Naive thymus-derived CD4-positive, alpha-beta T cell (primary cell): ENCODE measurements at regions of chr20 and their contacts with region 1.

Region 1: DNA sequence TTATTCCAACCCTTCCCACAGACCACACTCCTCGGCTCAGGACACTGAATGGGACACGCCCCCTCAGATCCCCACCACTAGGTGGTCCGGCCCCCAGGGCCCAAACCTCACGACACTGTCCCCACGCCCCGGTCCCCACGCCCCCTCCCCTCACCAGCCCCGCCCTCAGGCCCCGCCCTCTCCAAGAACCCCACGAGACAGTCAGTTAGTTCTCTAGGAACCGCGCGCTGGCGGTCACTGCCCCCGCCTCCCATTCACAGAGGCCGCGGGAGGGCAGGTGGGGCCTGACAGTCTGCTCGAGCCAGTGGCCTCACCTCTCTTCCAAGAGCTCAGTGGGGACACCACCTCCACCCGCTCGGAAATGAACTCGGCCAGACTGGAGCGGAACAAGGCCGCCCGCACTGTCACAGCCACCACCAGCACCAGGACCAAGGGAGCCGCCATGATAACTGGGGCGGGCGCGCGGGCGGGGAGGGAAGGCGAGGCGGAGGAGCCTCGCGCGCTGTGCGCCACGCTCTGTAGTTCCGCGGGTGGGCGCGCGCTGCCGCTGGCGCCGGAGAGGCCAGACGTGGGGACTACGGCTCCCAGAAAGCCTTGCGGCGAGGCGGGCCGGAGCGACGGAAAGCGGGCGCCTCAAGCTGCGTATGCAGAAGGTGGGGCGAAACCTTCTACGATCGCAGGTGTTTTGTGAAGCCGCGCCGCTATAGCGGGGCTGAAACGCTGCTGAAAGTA is at the start of gene PIGU:
- DNase-seq: peak; percentile 88 to 97 (median 96)
- ATAC-seq: peak; percentile 99
- H3K4me3 ChIP-seq: peak within 1 kb of the TSS; percentile 63
- H3K4me3 Mint-ChIP-seq: peak within 1 kb of the TSS; percentile 95 to 99 (median 96)
- H3K27ac ChIP-seq: peak within 1 kb of the TSS; percentile 95
- H3K27ac Mint-ChIP-seq: peak within 1 kb of the TSS; percentile 85 to 98 (median 97)
- H3K4me1 ChIP-seq: peaks cover 4 to 5% of the 10 kb centered on the region in 2 donors
- H3K4me1 Mint-ChIP-seq: peaks cover 14 to 37% (median 24%) of the 10 kb centered on the region in 7 donors
- H3K27me3 ChIP-seq: no peaks in the 10 kb centered on the region
- H3K27me3 Mint-ChIP-seq: no peaks in the 10 kb centered on the region
- total RNA-seq, gene PIGU: 8.6 to 21.3 (median 16.1) TPM

Region 2: GRCh38 chr20:34302723-34303528 is 373.9 kb before region 1 on chr20 and contains the start of gene AHCY:
- CTCF ChIA-PET with region 1: interaction called, 4 read pairs
- POLR2A ChIA-PET with region 1: interaction called, 3 read pairs
- intact Hi-C with region 1: loop called in 1 of 2 experiments (anchors 1 kb)
- DNase-seq: peak; percentile 84 to 95 (median 92)
- ATAC-seq: peak; percentile 96
- H3K4me3 ChIP-seq: peak within 1 kb of the TSS; percentile 91
- H3K4me3 Mint-ChIP-seq: peak within 1 kb of the TSS; percentile 90 to 96 (median 91)
- H3K27ac ChIP-seq: peak within 1 kb of the TSS; percentile 87
- H3K27ac Mint-ChIP-seq: peak within 1 kb of the TSS; percentile 89 to 95 (median 93)
- H3K4me1 ChIP-seq: peaks cover 3 to 6% of the 10 kb centered on the region in 2 donors
- H3K4me1 Mint-ChIP-seq: peaks cover 0 to 27% (median 14%) of the 10 kb centered on the region in 7 donors
- H3K27me3 ChIP-seq: no peaks in the 10 kb centered on the region
- H3K27me3 Mint-ChIP-seq: peaks cover 0 to 2% (median 0%) of the 10 kb centered on the region in 5 donors
- total RNA-seq, gene AHCY: 19.1 to 62.9 (median 23.7) TPM

Region 3: DNA sequence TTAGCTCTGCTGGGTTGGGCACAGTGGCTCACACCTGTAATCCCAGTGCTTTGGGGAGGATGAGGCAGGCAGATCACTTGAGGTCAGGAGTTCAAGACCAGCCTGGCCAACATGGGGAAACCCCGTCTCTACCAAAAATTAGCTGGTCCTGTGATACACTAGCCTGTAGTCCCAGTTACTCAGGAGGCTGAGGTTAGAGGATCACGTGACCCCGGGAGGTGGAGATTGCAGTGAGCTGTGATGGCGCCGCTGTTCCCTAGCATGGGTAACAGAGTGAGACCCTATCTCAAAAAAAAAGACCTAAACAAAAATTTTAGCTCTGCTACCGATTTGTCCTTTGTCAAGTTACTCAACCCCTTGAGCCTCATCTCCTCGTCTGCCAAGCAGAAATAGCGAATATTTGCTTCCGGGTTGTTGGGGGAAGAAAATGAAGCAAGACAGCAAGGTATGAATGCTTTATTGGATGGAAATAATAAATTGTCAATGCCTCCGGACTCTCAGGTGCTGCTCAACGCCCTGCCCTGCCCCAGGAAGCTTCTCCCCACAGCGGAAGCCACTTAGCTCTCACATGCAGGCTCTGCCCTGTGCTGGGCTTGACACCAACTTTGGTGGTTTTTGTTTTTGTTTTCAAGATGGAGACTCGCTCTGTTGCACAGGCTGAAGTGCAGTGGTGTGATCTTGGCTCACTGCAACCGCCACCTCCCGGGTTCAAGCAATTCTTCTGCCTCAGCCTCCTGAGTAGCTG is 338.7 kb before region 1 on chr20:
- CTCF ChIA-PET with region 1: no interaction called
- POLR2A ChIA-PET with region 1: no interaction called
- intact Hi-C with region 1: no loop called
- DNase-seq: no peak
- ATAC-seq: peak; percentile 81
- H3K4me3 ChIP-seq: no peak overlapping the region
- H3K4me3 Mint-ChIP-seq: no peak overlapping the region
- H3K27ac ChIP-seq: no peak overlapping the region
- H3K27ac Mint-ChIP-seq: no peak overlapping the region
- H3K4me1 ChIP-seq: peaks cover 0 to 11% of the 10 kb centered on the region in 2 donors
- H3K4me1 Mint-ChIP-seq: peaks cover 0 to 4% (median 0%) of the 10 kb centered on the region in 7 donors
- H3K27me3 ChIP-seq: no peaks in the 10 kb centered on the region
- H3K27me3 Mint-ChIP-seq: peaks cover 0 to 2% (median 0%) of the 10 kb centered on the region in 5 donors

Region 4: DNA sequence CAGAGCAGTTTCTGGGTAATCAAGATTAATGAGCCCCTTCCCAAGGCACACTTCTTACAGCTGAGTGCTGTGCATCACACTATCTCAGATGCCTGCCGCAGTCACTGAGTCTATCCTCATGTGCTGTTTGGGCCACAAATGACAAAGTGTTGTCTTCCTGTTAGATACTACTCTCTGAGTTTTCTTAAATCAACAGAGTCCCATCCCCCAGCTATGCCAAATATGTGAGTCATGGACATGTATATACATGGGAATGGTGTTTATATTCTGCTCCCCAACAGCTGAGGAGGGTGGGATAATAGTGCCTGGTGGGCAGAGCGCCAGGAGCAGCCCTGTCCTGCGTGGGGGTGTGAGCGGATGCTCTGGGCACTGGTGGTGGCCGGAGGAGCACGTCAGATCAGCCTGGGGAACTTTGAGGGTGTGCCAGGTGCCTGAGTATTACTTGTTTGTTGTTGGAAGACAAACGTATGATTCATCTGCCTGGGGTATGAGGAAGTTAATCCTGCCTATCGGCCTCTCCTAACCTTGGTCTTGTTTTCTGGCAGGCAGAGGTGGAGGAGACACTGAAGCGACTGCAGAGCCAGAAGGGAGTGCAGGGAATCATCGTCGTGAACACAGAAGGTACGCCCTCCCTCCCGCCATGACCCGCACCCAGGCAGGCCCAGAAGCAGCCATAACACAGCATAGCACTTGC is 150.9 kb before region 1 on chr20:
- CTCF ChIA-PET with region 1: no interaction called
- POLR2A ChIA-PET with region 1: no interaction called
- intact Hi-C with region 1: no loop called
- DNase-seq: peak in 1 of 9 donors; percentile 9
- ATAC-seq: no peak
- H3K4me3 ChIP-seq: no peak overlapping the region
- H3K4me3 Mint-ChIP-seq: no peak overlapping the region
- H3K27ac ChIP-seq: no peak overlapping the region
- H3K27ac Mint-ChIP-seq: peak overlapping the region in 4 of 9 donors; percentile 17 to 43 (median 39)
- H3K4me1 ChIP-seq: peaks cover 0 to 15% of the 10 kb centered on the region in 2 donors
- H3K4me1 Mint-ChIP-seq: peaks cover 20 to 54% (median 33%) of the 10 kb centered on the region in 7 donors
- H3K27me3 ChIP-seq: no peaks in the 10 kb centered on the region
- H3K27me3 Mint-ChIP-seq: no peaks in the 10 kb centered on the region

Region 5: DNA sequence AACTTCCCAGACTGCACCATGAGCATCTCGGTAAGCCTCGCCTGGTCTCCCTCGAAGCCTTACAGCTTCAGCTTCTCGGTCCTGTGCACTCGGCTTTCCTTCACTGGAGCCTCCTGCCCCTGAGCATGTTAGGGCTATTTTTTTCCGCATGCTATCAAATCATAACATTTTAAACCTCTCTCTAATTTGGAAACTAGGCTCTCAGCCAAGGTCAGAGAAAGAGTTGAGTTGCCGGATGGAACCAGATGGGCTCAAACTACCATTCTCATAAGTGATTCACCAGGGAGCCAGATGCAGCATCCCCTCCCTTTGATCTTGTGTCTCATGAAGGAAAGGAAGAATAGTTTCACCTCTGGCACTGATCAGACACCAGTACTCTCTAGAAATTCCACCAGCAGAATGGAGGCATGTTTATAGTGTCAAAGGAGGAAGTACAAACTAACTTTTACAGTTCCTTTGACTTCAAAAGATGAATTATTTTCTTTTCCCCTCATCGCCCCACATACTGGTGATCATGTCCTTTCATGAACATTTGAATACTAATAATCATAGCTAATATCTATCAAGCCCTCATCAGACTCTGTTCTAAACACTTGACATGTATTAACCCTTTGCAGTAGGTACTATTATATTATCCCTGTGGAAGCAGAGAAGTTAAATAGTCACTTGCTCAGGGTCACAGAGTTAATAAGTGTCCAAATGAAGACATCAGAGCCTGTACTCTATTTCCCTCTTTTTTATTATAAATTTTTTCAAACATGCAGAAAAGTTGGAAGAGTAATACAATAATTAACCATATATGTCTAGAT is 71.6 kb before region 1 on chr20:
- CTCF ChIA-PET with region 1: no interaction called
- POLR2A ChIA-PET with region 1: no interaction called
- intact Hi-C with region 1: no loop called
- DNase-seq: no peak
- ATAC-seq: no peak
- H3K4me3 ChIP-seq: no peak overlapping the region
- H3K4me3 Mint-ChIP-seq: no peak overlapping the region
- H3K27ac ChIP-seq: no peak overlapping the region
- H3K27ac Mint-ChIP-seq: no peak overlapping the region
- H3K4me1 ChIP-seq: no peaks in the 10 kb centered on the region
- H3K4me1 Mint-ChIP-seq: peaks cover 0 to 5% (median 0%) of the 10 kb centered on the region in 7 donors
- H3K27me3 ChIP-seq: no peaks in the 10 kb centered on the region
- H3K27me3 Mint-ChIP-seq: no peaks in the 10 kb centered on the region

Region 6: GRCh38 chr20:34639755-34640222 is 37.0 kb before region 1 on chr20:
- CTCF ChIA-PET with region 1: no interaction called
- POLR2A ChIA-PET with region 1: no interaction called
- intact Hi-C with region 1: no loop called
- DNase-seq: no peak
- ATAC-seq: no peak
- H3K4me3 ChIP-seq: no peak overlapping the region
- H3K4me3 Mint-ChIP-seq: no peak overlapping the region
- H3K27ac ChIP-seq: no peak overlapping the region
- H3K27ac Mint-ChIP-seq: peak overlapping the region in 1 of 9 donors; percentile 44
- H3K4me1 ChIP-seq: no peaks in the 10 kb centered on the region
- H3K4me1 Mint-ChIP-seq: peaks cover 0 to 6% (median 0%) of the 10 kb centered on the region in 7 donors
- H3K27me3 ChIP-seq: no peaks in the 10 kb centered on the region
- H3K27me3 Mint-ChIP-seq: no peaks in the 10 kb centered on the region

Region 7: DNA sequence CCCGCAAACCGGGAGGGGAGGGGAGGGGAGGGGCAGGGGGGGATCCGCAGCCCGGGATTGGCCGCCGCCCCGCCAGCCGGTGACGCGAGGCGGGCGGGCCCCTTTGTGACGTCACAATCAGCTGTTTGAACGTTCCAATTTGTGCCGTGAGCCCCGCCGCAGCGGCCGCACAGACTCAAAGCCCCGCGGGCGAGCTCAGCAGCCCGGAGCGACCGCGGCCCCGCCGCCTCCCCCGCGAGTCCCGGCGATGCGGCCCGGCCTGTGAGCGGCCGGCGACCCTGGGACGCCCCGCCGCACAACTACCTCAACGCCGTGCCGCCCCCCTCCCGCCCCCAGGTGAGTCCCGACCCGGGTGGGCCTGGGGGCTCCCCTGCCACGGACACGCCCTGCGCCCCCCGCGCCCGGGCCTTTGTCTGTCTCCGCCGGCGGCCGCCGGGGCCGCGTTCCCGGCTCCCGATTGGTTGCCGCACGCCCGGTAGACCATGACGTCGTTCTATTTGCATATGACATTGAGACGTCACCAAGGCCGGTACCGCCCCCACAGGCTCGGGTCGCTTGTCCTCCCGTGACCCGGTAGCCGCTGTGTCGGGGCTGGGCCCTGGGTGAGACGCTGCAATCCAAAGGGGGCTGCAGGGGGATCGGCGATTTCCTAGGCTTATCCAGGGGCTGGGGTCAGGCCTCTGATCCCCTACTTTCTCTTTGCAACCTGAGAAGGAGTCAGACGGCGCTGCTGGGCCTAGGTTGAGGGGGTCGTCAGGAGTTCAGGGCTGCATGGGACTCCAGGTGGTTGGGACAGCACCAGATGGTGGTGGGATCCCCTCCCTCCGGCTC is 27.6 kb after region 1 on chr20 and contains the start of gene TP53INP2:
- CTCF ChIA-PET with region 1: interaction called, 3 read pairs
- POLR2A ChIA-PET with region 1: interaction called, 14 read pairs
- intact Hi-C with region 1: loop called (anchors 1 kb)
- DNase-seq: peak; percentile 82 to 93 (median 87)
- ATAC-seq: peak; percentile 78
- H3K4me3 ChIP-seq: peak within 1 kb of the TSS; percentile 59
- H3K4me3 Mint-ChIP-seq: peak within 1 kb of the TSS; percentile 91 to 98 (median 94)
- H3K27ac ChIP-seq: peak within 1 kb of the TSS; percentile 94
- H3K27ac Mint-ChIP-seq: peak within 1 kb of the TSS; percentile 79 to 100 (median 97)
- H3K4me1 ChIP-seq: peaks cover 6 to 7% of the 10 kb centered on the region in 2 donors
- H3K4me1 Mint-ChIP-seq: peaks cover 15 to 39% (median 25%) of the 10 kb centered on the region in 7 donors
- H3K27me3 ChIP-seq: no peaks in the 10 kb centered on the region
- H3K27me3 Mint-ChIP-seq: peaks cover 0 to 25% (median 6%) of the 10 kb centered on the region in 5 donors
- total RNA-seq, gene TP53INP2: 1.2 to 41.4 (median 1.5) TPM

Region 8: GRCh38 chr20:35410613-35411012 is 733.8 kb after region 1 on chr20:
- CTCF ChIA-PET with region 1: no interaction called
- POLR2A ChIA-PET with region 1: no interaction called
- intact Hi-C with region 1: loop called in 1 of 2 experiments (anchors 2 kb)
- DNase-seq: no peak
- ATAC-seq: no peak
- H3K4me3 ChIP-seq: peak overlapping the region; percentile 79
- H3K4me3 Mint-ChIP-seq: peak overlapping the region; percentile 92 to 100 (median 98)
- H3K27ac ChIP-seq: no peak overlapping the region
- H3K27ac Mint-ChIP-seq: peak overlapping the region in 8 of 9 donors; percentile 48 to 100 (median 97)
- H3K4me1 ChIP-seq: peaks cover 8 to 9% of the 10 kb centered on the region in 2 donors
- H3K4me1 Mint-ChIP-seq: peaks cover 17 to 24% (median 22%) of the 10 kb centered on the region in 7 donors
- H3K27me3 ChIP-seq: no peaks in the 10 kb centered on the region
- H3K27me3 Mint-ChIP-seq: peaks cover 0 to 2% (median 0%) of the 10 kb centered on the region in 5 donors